CD8-positive, alpha-beta T cell (primary cell): ENCODE measurements at regions of chr22 and their contacts with region 1.

Region 1: GRCh38 chr22:29387921-29388758 is at the start of gene AP1B1:
- DNase-seq: peak; percentile 79 to 96 (median 92)
- ATAC-seq: peak; percentile 94
- H3K4me3 ChIP-seq: peak within 1 kb of the TSS; percentile 62 to 89
- H3K4me3 Mint-ChIP-seq: peak within 1 kb of the TSS; percentile 92
- H3K27ac ChIP-seq: peak within 1 kb of the TSS; percentile 71 to 93
- H3K27ac Mint-ChIP-seq: peak within 1 kb of the TSS; percentile 92
- H3K4me1 ChIP-seq: peaks cover 24% of the 10 kb centered on the region
- H3K4me1 Mint-ChIP-seq: peaks cover 39% of the 10 kb centered on the region
- H3K27me3 ChIP-seq: no peaks in the 10 kb centered on the region
- H3K27me3 Mint-ChIP-seq: no peaks in the 10 kb centered on the region
- CTCF ChIP-seq: no peak
- total RNA-seq, gene AP1B1: 27.9 to 28.1 TPM

Region 2: GRCh38 chr22:29408945-29409344 is 20.8 kb after region 1 on chr22:
- CTCF ChIA-PET with region 1: interaction called, 3 read pairs
- POLR2A ChIA-PET with region 1: no interaction called
- intact Hi-C with region 1: loop called (anchors 1 kb)
- DNase-seq: no peak
- ATAC-seq: no peak
- H3K4me3 ChIP-seq: no peak overlapping the region
- H3K4me3 Mint-ChIP-seq: no peak overlapping the region
- H3K27ac ChIP-seq: no peak overlapping the region
- H3K27ac Mint-ChIP-seq: no peak overlapping the region
- H3K4me1 ChIP-seq: no peaks in the 10 kb centered on the region
- H3K4me1 Mint-ChIP-seq: peaks cover 4% of the 10 kb centered on the region
- H3K27me3 ChIP-seq: no peaks in the 10 kb centered on the region
- H3K27me3 Mint-ChIP-seq: no peaks in the 10 kb centered on the region
- CTCF ChIP-seq: no peak

Region 3: DNA sequence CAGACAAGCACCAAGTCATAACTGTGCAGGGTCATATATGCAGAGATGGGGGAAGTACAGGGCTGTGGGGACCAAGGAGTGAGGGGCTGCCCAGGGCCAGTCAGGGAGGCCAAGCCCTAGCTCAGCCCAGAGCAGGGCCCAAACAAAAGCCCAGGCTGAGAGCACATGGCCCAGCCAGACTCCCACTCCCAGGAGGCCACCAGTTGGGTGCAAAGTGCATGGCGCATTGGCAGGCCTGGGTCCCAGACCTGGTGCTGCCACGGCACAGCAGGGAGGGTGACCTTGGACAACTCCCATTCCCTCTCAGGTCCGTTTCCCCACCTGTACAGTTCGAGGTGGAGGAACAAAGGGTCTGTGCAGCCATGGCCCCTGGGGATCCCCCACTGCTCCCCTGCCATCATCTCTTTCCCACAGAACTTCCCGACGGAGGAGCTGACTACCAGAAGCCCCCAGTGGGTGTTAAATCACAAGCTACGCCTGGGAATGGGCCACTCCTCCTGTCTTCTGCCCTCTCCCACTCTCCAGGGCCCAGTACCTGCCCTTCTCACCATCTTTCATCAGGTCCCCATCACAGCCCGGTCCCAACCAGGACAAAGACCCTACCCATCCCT is 192.2 kb after region 1 on chr22:
- CTCF ChIA-PET with region 1: no interaction called
- POLR2A ChIA-PET with region 1: interaction called, 5 read pairs
- intact Hi-C with region 1: loop called in 1 of 2 experiments (anchors 2 kb)
- DNase-seq: peak in 3 of 9 experiments; percentile 17 to 49 (median 36)
- ATAC-seq: peak; percentile 16
- H3K4me3 ChIP-seq: peak overlapping the region; percentile 69 to 80
- H3K4me3 Mint-ChIP-seq: peak overlapping the region; percentile 93
- H3K27ac ChIP-seq: peak overlapping the region; percentile 59 to 61
- H3K27ac Mint-ChIP-seq: peak overlapping the region; percentile 90
- H3K4me1 ChIP-seq: peaks cover 15% of the 10 kb centered on the region
- H3K4me1 Mint-ChIP-seq: peaks cover 21% of the 10 kb centered on the region
- H3K27me3 ChIP-seq: no peaks in the 10 kb centered on the region
- H3K27me3 Mint-ChIP-seq: no peaks in the 10 kb centered on the region
- CTCF ChIP-seq: no peak

Region 4: DNA sequence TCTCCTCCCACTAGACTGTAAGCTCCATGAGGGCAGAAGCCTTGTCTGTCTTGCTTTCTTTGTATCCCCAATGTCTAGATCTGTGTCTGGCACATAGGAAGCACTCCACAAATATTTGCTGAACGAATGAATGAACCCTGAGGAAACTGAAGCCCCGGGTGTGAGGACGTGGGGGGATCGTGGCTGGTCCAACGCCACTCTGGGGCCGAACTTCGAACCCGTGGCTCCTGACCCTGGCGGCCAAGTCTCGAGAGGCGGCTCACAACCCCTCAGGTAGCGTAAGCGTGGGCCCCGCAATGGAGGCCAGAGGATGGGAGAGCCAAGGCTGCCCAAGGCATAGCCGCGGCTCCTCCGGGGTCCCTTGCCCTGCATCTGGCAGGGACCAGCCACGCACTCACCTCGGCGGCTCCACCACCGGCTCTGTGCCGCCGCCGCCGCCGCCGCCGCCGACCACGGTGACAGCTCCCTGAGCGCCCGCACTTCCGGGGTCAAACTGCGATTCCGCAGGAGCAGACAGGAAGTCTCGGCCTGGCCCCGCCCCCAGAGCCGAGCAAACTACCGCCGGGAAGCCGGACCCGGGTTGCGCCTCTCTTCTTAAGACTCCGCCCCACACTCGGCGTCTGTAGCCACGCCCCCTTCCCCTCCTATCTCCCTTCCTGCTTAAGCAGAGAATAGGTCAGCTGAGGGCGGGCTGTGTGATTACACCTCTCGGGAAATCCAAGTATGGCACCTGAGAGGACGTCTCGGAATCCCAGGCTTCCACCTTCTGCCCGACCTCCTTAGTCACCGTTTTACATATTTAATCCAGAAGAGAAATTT is 449.8 kb after region 1 on chr22 and contains the start of gene ASCC2:
- CTCF ChIA-PET with region 1: no interaction called
- POLR2A ChIA-PET with region 1: no interaction called
- intact Hi-C with region 1: loop called in 1 of 2 experiments (anchors 1 kb)
- DNase-seq: peak; percentile 97 to 100 (median 99)
- ATAC-seq: peak; percentile 98
- H3K4me3 ChIP-seq: peak within 1 kb of the TSS; percentile 76 to 85
- H3K4me3 Mint-ChIP-seq: peak within 1 kb of the TSS; percentile 92
- H3K27ac ChIP-seq: peak within 1 kb of the TSS; percentile 55 to 85
- H3K27ac Mint-ChIP-seq: peak within 1 kb of the TSS; percentile 97
- H3K4me1 ChIP-seq: peaks cover 15% of the 10 kb centered on the region
- H3K4me1 Mint-ChIP-seq: peaks cover 43% of the 10 kb centered on the region
- H3K27me3 ChIP-seq: no peaks in the 10 kb centered on the region
- H3K27me3 Mint-ChIP-seq: no peaks in the 10 kb centered on the region
- CTCF ChIP-seq: no peak
- total RNA-seq, gene ASCC2: 66.2 to 76.5 TPM

Region 5: DNA sequence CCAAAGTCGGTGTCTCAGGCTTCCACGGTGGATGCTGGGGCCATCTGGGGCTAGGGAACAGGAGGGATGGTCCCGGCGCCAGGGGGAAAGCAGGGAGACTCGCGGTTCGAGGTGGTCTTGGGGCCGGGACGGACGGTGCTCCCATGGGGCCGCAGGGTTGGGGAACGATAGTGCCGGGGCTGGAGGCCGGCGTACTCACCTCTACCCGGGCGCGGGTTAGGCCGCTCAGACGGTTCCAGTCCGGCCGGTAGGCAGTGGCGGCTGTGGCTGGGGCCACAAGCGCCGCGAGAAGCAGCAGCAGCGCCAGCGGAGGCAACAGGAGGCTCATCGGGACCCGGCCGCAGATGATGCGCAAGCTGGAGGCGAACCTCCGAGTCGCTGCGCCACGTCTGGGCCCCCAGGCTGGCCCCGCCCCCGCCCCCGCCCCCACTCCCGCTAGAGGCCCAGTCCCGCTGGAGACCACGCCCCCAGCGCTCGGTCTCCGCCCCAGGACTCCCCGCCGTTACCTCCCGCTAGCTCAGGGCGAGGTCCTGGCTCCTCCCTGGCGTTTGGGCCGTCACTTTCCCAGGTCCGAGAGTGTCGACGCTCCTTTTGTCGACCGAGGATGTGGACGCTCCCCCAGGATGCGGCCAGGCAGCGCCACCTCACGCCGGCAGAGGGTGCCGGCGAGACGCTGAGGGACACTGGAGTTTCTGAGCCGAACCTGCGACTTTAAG is 1719.2 kb after region 1 on chr22 and contains the start of gene SELENOM:
- CTCF ChIA-PET with region 1: no interaction called
- POLR2A ChIA-PET with region 1: no interaction called
- intact Hi-C with region 1: loop called in 1 of 2 experiments (anchors 5 kb)
- DNase-seq: peak; percentile 69 to 94 (median 85)
- ATAC-seq: peak; percentile 96
- H3K4me3 ChIP-seq: peak within 1 kb of the TSS; percentile 80 to 84
- H3K4me3 Mint-ChIP-seq: peak within 1 kb of the TSS; percentile 98
- H3K27ac ChIP-seq: peak within 1 kb of the TSS; percentile 72 to 80
- H3K27ac Mint-ChIP-seq: peak within 1 kb of the TSS; percentile 91
- H3K4me1 ChIP-seq: peaks cover 17% of the 10 kb centered on the region
- H3K4me1 Mint-ChIP-seq: peaks cover 25% of the 10 kb centered on the region
- H3K27me3 ChIP-seq: no peaks in the 10 kb centered on the region
- H3K27me3 Mint-ChIP-seq: no peaks in the 10 kb centered on the region
- CTCF ChIP-seq: peak; percentile 70
- total RNA-seq, gene SELENOM: 55.6 to 62.2 TPM